Transverse colon (tissue), 4 donors: ENCODE measurements at regions of chr5 and their contacts with region 1.

Region 1: DNA sequence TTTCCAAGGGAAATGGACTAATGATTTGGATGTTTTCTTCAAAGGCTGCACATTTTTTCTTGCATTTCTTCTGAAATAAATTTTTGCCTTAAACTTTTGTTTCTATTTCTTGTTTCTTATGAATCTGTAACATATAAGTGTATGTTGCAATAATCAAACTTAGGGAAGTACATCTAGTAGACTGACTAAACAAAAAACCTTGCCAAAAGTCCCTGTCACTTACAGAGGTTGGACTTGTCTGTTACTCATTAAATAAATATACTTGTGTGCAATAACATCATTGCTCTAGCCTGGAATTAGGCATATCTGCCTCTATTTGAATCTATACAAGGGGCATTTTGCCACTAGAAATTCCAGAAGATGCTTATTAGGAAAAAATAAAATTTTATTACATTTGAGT is 56.6 kb downstream of the C6 start:
- DNase-seq: no peak
- H3K4me3 ChIP-seq: no peak overlapping the region
- H3K27ac ChIP-seq: no peak overlapping the region
- H3K4me1 ChIP-seq: peaks cover 0 to 19% (median 2%) of the 10 kb centered on the region in 4 donors
- H3K27me3 ChIP-seq: no peaks in the 10 kb centered on the region
- CTCF ChIP-seq: no peak
- EP300 ChIP-seq: no peak
- POLR2A ChIP-seq: no peak

Region 2: GRCh38 chr5:40605295-40605958 is 551.3 kb before region 1 on chr5:
- in situ Hi-C with region 1: no loop called
- intact Hi-C with region 1: no loop called
- DNase-seq: no peak
- H3K4me3 ChIP-seq: no peak overlapping the region
- H3K27ac ChIP-seq: peak overlapping the region in 1 of 4 donors; percentile 28
- H3K4me1 ChIP-seq: peaks cover 0 to 7% (median 0%) of the 10 kb centered on the region in 4 donors
- H3K27me3 ChIP-seq: no peaks in the 10 kb centered on the region
- CTCF ChIP-seq: no peak
- EP300 ChIP-seq: no peak
- POLR2A ChIP-seq: no peak

Region 3: DNA sequence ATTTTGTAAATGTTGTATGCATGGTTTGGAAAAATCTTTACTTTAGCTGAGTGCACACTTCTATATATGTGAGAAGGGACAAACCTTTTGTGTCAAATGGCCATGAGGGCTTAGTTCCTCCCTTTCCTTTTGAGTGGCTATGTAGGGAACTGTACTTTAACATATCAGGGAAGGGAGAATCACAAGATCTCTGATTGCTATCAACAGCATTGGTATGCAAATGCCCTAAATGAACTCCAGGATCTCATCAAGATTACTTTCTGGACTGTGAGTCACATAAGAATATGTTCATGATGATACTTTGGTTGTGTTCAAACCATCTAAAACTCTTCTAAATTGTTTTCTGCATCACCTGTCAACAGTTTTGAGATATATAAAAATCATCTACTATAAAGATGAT is 54.4 kb before region 1 on chr5:
- in situ Hi-C with region 1: no loop called
- intact Hi-C with region 1: loop called (anchors 2 kb)
- DNase-seq: no peak
- H3K4me3 ChIP-seq: no peak overlapping the region
- H3K27ac ChIP-seq: no peak overlapping the region
- H3K4me1 ChIP-seq: no peaks in the 10 kb centered on the region
- H3K27me3 ChIP-seq: no peaks in the 10 kb centered on the region
- CTCF ChIP-seq: no peak
- EP300 ChIP-seq: no peak
- POLR2A ChIP-seq: no peak